Heart left ventricle (tissue), 16 donors: ENCODE measurements at regions of chr5 and their contacts with region 1.

Region 1: GRCh38 chr5:173625696-173626504 is 9.4 kb upstream of the BOD1 start:
- DNase-seq: peak in 1 of 5 donors; percentile 31
- ATAC-seq: peak; percentile 60 to 82 (median 68)
- H3K4me3 ChIP-seq: no peak overlapping the region
- H3K27ac ChIP-seq: peak overlapping the region in 5 of 12 donors; percentile 1 to 54 (median 36)
- H3K4me1 ChIP-seq: peaks cover 0 to 17% (median 5%) of the 10 kb centered on the region in 12 donors
- H3K27me3 ChIP-seq: no peaks in the 10 kb centered on the region
- CTCF ChIP-seq: peak in 6 of 12 donors; percentile 6 to 44 (median 19)
- POLR2A ChIP-seq: no peak

Region 2: DNA sequence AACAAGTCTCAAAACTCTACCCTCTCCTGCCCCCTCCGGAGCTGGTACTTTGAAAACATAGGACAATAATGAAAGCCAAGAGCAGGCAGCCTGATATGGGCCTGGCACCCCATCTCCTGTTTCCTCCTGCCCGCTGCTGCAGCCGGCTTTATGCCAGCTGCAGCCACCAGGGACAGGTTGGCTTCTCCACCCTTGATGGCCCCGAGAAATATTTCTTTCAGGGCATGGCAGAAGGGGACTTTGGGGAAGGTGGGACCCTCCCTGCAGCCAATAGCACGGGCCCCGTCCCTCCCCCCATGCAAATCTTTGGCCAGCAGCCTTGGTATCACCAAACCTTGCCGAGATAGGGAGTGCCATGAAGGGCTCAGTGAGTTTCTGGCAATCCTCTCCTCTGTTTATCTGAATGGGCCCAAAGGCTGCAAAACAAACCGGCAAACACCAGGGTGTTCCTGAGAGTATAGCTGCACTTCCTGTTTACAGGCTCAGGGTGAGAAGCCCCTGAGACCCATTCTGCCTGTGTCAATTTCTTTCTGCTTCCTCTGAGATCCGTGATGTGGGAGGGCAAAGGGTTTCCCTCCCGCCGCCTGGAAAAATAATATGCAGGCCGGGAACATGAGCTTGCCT is 63.9 kb after region 1 on chr5:
- intact Hi-C with region 1: loop called in 1 of 10 experiments (anchors 10 kb)
- DNase-seq: peak in 3 of 5 donors; percentile 37 to 59 (median 44)
- ATAC-seq: peak; percentile 80 to 89 (median 84)
- H3K4me3 ChIP-seq: peak overlapping the region in 4 of 12 donors; percentile 3 to 19 (median 8)
- H3K27ac ChIP-seq: peak overlapping the region; percentile 31 to 83 (median 68)
- H3K4me1 ChIP-seq: peaks cover 9 to 25% (median 17%) of the 10 kb centered on the region in 12 donors
- H3K27me3 ChIP-seq: no peaks in the 10 kb centered on the region
- CTCF ChIP-seq: peak in 6 of 12 donors; percentile 10 to 35 (median 22)
- POLR2A ChIP-seq: no peak

Region 3: DNA sequence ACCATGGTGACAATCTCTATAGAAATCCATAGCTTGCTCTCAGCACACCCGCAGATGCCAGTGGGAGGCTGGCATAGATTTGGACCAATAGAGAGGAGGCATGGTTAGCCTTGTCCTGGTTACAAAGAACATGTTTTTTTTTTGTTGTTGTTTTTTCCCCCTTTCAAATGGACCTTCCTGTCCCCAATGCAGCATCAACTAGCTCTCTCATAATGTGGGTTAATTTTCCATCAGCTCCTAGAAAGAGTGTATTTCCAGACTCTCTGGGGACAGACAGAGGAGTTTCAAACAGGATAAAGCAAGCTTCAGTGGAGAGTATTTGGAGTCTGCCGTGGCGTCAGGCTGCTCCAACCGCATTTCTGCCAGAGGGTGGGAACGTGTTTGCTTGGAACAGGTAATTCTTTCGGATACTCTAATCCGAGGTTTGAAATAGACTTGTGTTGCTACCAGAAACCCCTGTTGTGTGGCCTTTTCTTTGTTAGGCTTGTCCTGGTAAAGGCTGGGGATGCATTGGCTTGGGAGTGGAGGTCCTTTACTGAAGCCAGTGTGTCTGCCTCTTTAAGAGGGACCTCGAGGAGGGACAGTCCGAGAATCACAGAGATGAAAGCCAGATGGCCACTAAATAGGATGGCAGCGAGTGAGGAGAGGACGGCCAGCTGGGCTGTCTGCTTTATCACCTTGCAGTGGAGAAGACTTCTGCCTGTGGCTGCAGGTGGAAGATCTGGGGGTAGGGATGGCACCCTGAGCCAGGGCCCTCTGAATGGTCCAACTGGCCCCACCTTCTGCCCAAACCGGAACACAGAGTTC is 131.7 kb after region 1 on chr5:
- intact Hi-C with region 1: loop called in 3 of 10 experiments (anchors 5 kb)
- DNase-seq: no peak
- ATAC-seq: peak in 2 of 4 donors; percentile 18 to 40
- H3K4me3 ChIP-seq: no peak overlapping the region
- H3K27ac ChIP-seq: no peak overlapping the region
- H3K4me1 ChIP-seq: peaks cover 0 to 28% (median 2%) of the 10 kb centered on the region in 12 donors
- H3K27me3 ChIP-seq: no peaks in the 10 kb centered on the region
- CTCF ChIP-seq: no peak
- POLR2A ChIP-seq: no peak

Region 4: DNA sequence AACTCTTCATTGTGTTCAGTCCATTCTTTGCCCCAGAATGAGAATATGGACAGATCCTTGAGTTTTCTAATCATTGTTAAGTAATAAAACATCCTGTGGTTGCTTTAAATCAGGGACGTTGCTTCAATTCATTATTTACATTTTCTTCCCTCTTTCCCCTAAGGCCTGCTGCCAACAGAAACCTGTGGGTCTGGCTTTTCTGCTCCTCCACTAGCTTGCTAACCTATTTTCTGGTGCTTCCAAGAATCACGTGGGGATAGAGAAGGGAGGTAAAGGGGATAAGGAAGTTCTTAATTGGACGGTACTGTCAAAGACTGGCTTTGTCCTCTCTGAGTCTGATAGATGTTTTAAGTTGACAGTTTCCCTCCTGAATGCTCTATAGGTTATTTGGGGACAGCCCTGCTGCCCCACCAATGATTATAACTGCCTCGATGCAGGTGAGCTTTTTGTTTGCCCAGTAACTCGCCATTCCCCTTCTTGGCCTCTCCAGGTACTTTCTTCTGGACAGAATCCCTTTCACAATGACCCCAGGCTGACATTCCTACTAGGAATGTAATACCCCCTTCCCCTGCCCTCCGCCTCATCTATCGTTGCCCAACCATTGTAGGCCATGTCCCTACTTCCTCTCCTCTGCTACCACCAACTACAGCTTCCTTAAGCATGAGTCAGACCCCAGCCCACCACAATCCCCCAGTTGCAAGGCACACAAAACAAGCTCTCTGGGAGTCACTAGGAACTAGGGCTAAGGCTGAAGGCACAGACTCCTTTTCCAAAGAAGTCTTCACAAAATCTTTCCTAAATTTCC is 242.4 kb after region 1 on chr5:
- intact Hi-C with region 1: loop called in 1 of 10 experiments (anchors 10 kb)
- DNase-seq: no peak
- ATAC-seq: no peak
- H3K4me3 ChIP-seq: no peak overlapping the region
- H3K27ac ChIP-seq: peak overlapping the region in 1 of 12 donors; percentile 16
- H3K4me1 ChIP-seq: peaks cover 0 to 46% (median 0%) of the 10 kb centered on the region in 12 donors
- H3K27me3 ChIP-seq: no peaks in the 10 kb centered on the region
- CTCF ChIP-seq: no peak
- POLR2A ChIP-seq: no peak

Region 5: GRCh38 chr5:173972925-173973615 is 347.2 kb after region 1 on chr5:
- intact Hi-C with region 1: loop called in 2 of 10 experiments (anchors 2 kb)
- DNase-seq: peak; percentile 78 to 84 (median 80)
- ATAC-seq: peak; percentile 73 to 84 (median 80)
- H3K4me3 ChIP-seq: peak overlapping the region in 11 of 12 donors; percentile 33 to 65 (median 51)
- H3K27ac ChIP-seq: peak overlapping the region in 10 of 12 donors; percentile 1 to 83 (median 65)
- H3K4me1 ChIP-seq: peaks cover 0 to 25% (median 9%) of the 10 kb centered on the region in 12 donors
- H3K27me3 ChIP-seq: peaks cover 0 to 4% (median 0%) of the 10 kb centered on the region in 9 donors
- CTCF ChIP-seq: peak; percentile 66 to 93 (median 86)
- POLR2A ChIP-seq: no peak

Region 6: GRCh38 chr5:174311531-174312269 is 685.8 kb after region 1 on chr5:
- intact Hi-C with region 1: loop called in 4 of 10 experiments (anchors 5 kb)
- DNase-seq: peak; percentile 59 to 83 (median 69)
- ATAC-seq: peak in 3 of 4 donors; percentile 55 to 89 (median 69)
- H3K4me3 ChIP-seq: peak overlapping the region in 11 of 12 donors; percentile 26 to 61 (median 50)
- H3K27ac ChIP-seq: no peak overlapping the region
- H3K4me1 ChIP-seq: peaks cover 0 to 13% (median 4%) of the 10 kb centered on the region in 12 donors
- H3K27me3 ChIP-seq: peaks cover 0 to 36% (median 5%) of the 10 kb centered on the region in 9 donors
- CTCF ChIP-seq: peak; percentile 77 to 96 (median 88)
- POLR2A ChIP-seq: no peak

Region 7: GRCh38 chr5:174317259-174317894 is 691.5 kb after region 1 on chr5:
- intact Hi-C with region 1: loop called in 4 of 10 experiments (anchors 5 kb)
- DNase-seq: peak in 2 of 5 donors; percentile 18 to 46
- ATAC-seq: peak; percentile 57 to 94 (median 90)
- H3K4me3 ChIP-seq: no peak overlapping the region
- H3K27ac ChIP-seq: no peak overlapping the region
- H3K4me1 ChIP-seq: peaks cover 0 to 5% (median 0%) of the 10 kb centered on the region in 12 donors
- H3K27me3 ChIP-seq: peaks cover 0 to 36% (median 8%) of the 10 kb centered on the region in 9 donors
- CTCF ChIP-seq: peak; percentile 41 to 80 (median 70)
- POLR2A ChIP-seq: no peak